WTC11 (cell line): ENCODE measurements at regions of chr9 and their contacts with region 1.

Region 1: DNA sequence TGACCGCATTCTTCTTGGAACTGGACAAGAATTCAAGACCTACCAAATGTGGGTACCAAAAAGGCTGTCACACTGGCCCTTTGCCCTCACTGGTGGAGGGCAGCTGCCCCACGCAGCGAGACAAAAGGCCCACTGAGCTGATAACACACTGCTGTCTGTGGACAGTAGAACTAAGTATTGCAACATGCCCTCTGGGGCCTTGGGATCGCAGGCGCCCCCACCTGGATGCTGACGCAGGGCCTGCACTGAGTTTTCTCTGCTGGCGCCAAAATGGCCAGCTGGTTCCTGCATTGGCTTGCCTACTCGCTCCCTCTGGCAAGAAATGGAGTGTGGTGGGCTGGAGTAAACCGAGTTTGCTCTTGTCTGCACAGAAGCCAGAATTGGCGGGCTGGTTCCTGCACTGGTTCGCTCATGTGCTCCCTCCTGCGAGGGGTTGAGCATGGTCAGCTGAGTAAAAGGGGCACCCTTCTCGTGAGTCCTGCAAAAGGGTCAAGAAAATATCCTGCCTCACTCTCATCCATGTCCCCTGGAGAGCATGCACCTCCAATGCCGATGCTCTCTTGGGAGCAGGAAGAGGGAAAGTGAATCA is 55.7 kb downstream of the NXNL2 start:
- DNase-seq: peak; percentile 70
- ATAC-seq: peak; percentile 87
- H3K4me3 Mint-ChIP-seq: no peak overlapping the region
- H3K27ac Mint-ChIP-seq: no peak overlapping the region
- H3K4me1 Mint-ChIP-seq: peaks cover 11% of the 10 kb centered on the region
- H3K27me3 Mint-ChIP-seq: no peaks in the 10 kb centered on the region
- CTCF ChIP-seq: no peak

Region 2: DNA sequence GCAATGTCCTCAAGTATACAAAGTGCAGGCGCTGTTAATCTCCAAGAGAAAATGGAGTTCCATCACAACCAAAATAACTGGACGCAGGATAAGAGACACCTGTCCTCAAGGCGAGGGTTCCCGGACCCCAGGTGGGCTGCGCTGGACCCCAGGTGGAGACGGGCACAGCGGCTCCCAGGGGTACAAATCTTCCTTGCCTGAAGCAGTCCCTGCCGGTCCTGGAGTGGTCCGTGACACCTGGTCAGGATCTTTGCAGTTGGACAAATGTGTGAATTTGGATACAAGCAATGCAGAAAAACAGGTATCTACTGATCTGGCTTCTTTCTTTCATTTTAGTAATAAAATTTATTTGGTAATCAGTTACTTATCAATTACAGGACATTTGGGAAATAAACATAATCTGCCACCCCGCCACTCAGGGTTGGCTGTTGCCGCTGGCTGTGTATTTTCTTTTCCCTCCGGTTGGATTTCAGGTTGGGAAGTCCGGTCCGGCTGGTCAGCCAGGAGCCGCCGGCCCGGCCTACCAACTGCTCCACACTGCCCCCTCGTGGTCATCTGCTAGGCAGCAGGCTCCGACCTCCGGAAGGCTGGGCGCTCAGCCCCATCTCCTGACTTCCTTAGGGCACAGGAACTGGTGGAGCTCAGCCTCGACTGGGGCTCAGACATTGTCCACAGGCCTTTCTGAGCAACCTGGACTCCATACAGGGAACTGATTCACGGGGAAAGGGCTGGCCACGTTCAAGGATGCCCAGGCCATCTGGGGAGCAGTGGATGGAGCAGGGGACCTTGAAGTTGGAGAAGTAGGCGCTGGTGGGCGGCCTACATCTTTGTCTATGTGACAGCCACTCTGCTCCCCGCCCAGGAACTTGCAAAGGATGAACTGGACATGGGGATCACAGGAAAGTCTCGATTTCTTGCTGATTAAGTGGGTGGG is 12.3 kb before region 1 on chr9:
- CTCF ChIA-PET with region 1: interaction called, 12 read pairs
- POLR2A ChIA-PET with region 1: no interaction called
- DNase-seq: peak; percentile 93
- ATAC-seq: peak; percentile 95
- H3K4me3 Mint-ChIP-seq: no peak overlapping the region
- H3K27ac Mint-ChIP-seq: no peak overlapping the region
- H3K4me1 Mint-ChIP-seq: peaks cover 10% of the 10 kb centered on the region
- H3K27me3 Mint-ChIP-seq: peaks cover 7% of the 10 kb centered on the region; the same call in 1 of the 2 replicates
- CTCF ChIP-seq: peak; percentile 92

Region 3: DNA sequence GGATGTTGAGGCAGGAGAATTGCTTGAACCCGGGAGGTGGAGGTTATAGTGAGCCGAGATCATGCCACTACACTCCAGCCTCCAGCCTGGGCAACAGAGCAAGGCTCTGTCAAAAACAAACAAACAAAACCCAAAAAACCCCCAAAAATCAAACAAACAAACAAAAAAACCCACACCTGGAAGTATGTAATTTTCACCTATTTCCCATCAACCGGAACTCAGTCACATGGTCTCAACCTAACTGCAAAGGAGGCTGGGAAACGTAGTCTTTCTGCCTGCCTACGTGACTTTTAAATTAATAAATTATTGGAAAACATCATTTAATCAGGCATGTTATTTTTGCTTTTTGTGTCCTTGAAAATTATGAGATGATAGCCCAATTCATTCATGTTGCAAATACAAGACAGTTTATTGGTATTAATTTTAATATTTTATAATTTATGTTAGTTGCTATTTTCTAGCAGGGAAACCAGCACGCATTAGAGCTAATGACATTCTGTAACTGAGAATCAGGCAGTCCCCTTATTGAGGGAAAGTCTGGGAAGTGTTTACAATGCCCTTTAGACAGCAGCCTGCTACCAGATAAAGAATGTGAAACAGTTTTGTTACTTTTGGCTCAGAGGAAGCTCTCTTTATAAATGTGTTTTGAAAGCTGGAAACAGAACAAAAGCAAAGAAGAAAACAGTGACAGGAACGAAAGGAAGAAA is 54.7 kb after region 1 on chr9:
- CTCF ChIA-PET with region 1: no interaction called
- POLR2A ChIA-PET with region 1: no interaction called
- DNase-seq: no peak
- ATAC-seq: no peak
- H3K4me3 Mint-ChIP-seq: no peak overlapping the region
- H3K27ac Mint-ChIP-seq: no peak overlapping the region
- H3K4me1 Mint-ChIP-seq: no peaks in the 10 kb centered on the region
- H3K27me3 Mint-ChIP-seq: peaks cover 2% of the 10 kb centered on the region; the same call in 1 of the 2 replicates
- CTCF ChIP-seq: no peak